Heart left ventricle (tissue), 16 donors: ENCODE measurements at regions of chr9 and their contacts with region 1.

Region 1: GRCh38 chr9:5437254-5438216 is at the start of gene PLGRKT:
- DNase-seq: peak; percentile 95 to 98 (median 97)
- ATAC-seq: peak; percentile 98 to 99 (median 99)
- H3K4me3 ChIP-seq: peak within 1 kb of the TSS; percentile 32 to 84 (median 75)
- H3K27ac ChIP-seq: peak within 1 kb of the TSS; percentile 83 to 99 (median 94)
- H3K4me1 ChIP-seq: peaks cover 0 to 24% (median 18%) of the 10 kb centered on the region in 12 donors
- H3K27me3 ChIP-seq: no peaks in the 10 kb centered on the region
- CTCF ChIP-seq: peak in 8 of 12 donors; percentile 8 to 56 (median 30)
- POLR2A ChIP-seq: peak in 1 of 2 donors; percentile 95
- total RNA-seq, gene PLGRKT: 20.8 to 37.2 (median 31.0) TPM

Region 2: DNA sequence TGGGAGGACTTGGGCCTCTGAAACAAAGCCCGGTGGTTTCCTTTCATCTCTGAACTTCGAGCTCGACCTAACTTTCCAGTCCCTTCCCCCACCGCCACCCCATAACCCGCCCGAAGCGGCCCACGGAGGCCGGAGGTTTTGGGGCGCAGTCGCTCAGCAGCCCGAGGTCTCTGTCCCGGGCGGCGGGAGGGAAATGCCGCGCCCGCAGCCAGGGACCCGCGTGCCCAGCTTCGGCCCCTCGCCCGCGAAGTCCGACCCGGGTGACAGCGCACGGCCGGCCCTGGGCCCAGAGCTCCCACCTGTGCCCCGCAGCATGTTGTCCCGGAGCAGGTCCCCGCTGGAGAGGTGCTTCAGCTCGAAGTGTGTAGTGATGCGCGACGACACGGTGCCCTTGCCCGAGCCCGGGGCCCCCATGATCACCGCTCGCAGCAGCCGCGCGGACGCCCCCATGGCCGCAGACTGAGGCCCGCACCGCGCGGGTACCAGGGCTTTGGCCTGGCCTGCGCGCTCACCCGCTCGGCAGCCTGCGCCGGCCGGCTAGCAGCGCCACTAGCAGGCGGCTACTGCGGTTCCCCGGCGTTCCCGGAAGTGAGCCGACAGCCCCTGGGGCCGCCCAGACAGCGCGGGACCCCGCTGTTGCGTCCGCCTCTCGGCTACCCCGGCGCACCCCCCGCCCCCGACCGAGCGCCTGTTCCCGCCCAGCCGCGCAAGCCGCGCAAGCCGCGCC is 696.7 kb before region 1 on chr9 and contains the start of gene AK3:
- intact Hi-C with region 1: loop called in 2 of 10 experiments (anchors 10 kb)
- DNase-seq: peak; percentile 91 to 94 (median 93)
- ATAC-seq: peak; percentile 89 to 95 (median 93)
- H3K4me3 ChIP-seq: peak within 1 kb of the TSS; percentile 54 to 98 (median 89)
- H3K27ac ChIP-seq: peak within 1 kb of the TSS; percentile 90 to 97 (median 94)
- H3K4me1 ChIP-seq: peaks cover 0 to 29% (median 15%) of the 10 kb centered on the region in 12 donors
- H3K27me3 ChIP-seq: no peaks in the 10 kb centered on the region
- CTCF ChIP-seq: peak in 10 of 12 donors; percentile 16 to 60 (median 34)
- POLR2A ChIP-seq: peak in 1 of 2 donors; percentile 87
- total RNA-seq, gene AK3: 117 to 231 (median 159) TPM

Region 3: DNA sequence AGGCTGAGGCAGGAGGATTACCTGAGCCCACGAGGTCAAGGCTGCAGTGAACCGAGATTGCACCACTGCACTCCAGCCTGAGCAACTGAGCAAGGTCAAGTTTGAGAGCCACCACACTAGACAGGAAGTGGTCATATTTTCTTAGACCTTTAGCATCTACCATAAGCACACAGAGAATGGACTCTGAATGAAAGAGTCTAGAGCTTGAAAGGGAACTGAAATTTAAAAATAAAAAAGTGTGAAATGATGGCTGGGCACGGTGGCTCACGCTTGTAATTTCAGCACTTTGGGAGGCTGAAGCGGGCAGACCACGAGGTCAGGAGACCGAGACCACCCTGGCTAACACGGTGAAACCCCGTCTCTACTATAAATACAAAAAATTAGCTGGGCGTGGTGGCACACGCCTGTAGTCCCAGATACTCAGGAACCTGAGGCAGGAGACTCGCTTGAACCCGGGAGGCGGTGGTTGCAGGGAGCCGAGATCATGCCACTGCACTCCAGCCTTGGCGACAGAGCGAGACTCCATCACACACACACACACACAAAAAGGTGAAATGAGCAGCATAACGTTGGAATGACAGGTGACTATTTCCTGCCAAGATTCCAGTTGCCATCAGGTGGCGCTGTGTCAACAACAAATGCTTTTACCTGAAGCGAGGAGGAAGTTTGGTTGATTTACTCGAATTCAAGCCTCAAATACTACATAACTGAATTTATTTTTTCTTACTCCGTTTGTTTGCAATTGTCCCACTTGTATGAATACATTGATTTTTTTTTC is 675.2 kb before region 1 on chr9:
- intact Hi-C with region 1: loop called in 3 of 10 experiments (anchors 5 to 10 kb)
- DNase-seq: peak in 4 of 5 donors; percentile 59 to 71 (median 66)
- ATAC-seq: peak; percentile 32 to 62 (median 50)
- H3K4me3 ChIP-seq: peak overlapping the region in 9 of 12 donors; percentile 7 to 39 (median 32)
- H3K27ac ChIP-seq: peak overlapping the region in 6 of 12 donors; percentile 3 to 63 (median 36)
- H3K4me1 ChIP-seq: peaks cover 0 to 45% (median 11%) of the 10 kb centered on the region in 12 donors
- H3K27me3 ChIP-seq: no peaks in the 10 kb centered on the region
- CTCF ChIP-seq: peak; percentile 61 to 91 (median 81)
- POLR2A ChIP-seq: no peak

Region 4: GRCh38 chr9:5450359-5451091 is 13.0 kb after region 1 on chr9 and contains the start of gene CD274:
- intact Hi-C with region 1: loop called in 2 of 10 experiments (anchors 1 kb)
- DNase-seq: peak; percentile 90 to 95 (median 94)
- ATAC-seq: peak; percentile 96 to 99 (median 98)
- H3K4me3 ChIP-seq: peak within 1 kb of the TSS; percentile 7 to 83 (median 66)
- H3K27ac ChIP-seq: peak within 1 kb of the TSS; percentile 6 to 97 (median 80)
- H3K4me1 ChIP-seq: peaks cover 0 to 85% (median 21%) of the 10 kb centered on the region in 12 donors
- H3K27me3 ChIP-seq: no peaks in the 10 kb centered on the region
- CTCF ChIP-seq: peak; percentile 53 to 88 (median 66)
- POLR2A ChIP-seq: no peak
- total RNA-seq, gene CD274: 11.6 to 54.4 (median 15.7) TPM

Region 5: DNA sequence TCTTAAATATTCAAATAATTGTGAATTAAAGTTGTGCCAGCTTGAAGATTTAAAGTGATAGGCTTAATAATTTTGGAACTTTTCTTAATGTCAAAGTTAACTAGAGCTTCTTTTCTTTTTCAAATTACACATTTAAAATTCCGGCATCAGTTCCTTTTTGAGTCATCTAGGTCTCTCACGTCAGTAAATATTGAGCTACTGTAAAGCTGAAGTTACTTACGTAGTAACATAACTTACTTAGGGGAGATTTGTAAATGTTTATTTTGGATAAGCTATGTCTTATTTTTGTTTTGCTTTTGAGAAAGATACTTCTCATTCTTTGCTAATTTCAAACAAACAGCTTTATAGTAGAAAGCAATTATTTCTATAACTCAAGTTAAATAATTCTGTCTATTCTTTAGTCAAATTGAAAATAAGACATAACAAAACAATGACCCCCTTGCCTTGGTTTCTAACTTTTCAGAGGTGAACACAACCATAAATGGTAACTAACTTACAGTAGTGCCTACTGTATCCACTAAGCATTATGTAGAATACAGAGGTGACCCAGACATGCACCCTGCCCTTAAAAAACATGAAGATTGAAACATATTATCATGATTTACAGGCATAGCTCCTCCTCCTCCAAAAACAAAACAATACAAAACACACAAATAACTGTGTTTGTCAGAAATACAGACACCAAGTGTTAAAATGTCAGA is 42.6 kb after region 1 on chr9:
- intact Hi-C with region 1: no loop called
- DNase-seq: no peak
- ATAC-seq: no peak
- H3K4me3 ChIP-seq: no peak overlapping the region
- H3K27ac ChIP-seq: no peak overlapping the region
- H3K4me1 ChIP-seq: peaks cover 0 to 3% (median 0%) of the 10 kb centered on the region in 12 donors
- H3K27me3 ChIP-seq: no peaks in the 10 kb centered on the region
- CTCF ChIP-seq: no peak
- POLR2A ChIP-seq: no peak

Region 6: DNA sequence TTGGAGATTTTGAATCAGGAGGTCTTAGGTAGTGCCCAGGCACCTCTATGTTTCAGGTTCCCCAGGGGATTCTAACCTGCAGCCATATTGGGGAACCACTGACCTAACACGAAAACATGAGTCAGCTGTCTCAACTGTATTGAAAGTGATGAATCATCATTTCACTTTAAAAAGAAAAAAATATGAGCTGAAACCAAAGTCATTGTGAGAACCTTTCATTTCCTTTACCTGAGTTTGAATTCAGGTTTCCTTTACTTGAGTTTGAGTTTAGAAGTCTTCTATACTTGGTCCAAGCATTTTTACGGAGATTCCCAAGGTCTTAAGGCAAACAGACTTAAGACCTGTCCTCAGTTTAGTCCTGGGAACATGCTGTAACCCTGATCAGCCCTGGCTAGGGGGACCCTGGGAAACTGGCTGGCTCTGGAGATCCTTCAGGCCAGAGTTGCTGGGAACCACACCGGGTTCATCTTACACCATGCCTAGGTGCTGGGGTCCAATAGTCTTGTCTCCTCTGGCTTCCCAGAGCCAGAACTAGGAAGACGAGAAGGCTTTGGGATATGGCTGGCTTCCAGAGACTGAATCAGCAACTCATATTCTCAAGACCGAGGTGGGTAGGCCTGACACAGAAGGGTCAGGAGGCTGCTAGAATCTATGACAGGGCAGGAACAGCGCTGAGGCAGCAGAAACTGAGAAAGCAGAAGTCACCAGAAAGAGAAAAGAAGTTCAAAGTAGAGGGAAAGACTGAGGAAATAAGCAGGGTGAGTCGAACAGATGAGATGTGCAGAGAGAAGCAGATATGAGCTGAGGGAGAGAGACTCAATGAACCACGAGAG is 56.4 kb after region 1 on chr9:
- intact Hi-C with region 1: no loop called
- DNase-seq: peak in 2 of 5 donors; percentile 38 to 50
- ATAC-seq: peak in 3 of 4 donors; percentile 64 to 78 (median 73)
- H3K4me3 ChIP-seq: no peak overlapping the region
- H3K27ac ChIP-seq: peak overlapping the region in 3 of 12 donors; percentile 32 to 91 (median 37)
- H3K4me1 ChIP-seq: peaks cover 0 to 36% (median 0%) of the 10 kb centered on the region in 12 donors
- H3K27me3 ChIP-seq: no peaks in the 10 kb centered on the region
- CTCF ChIP-seq: no peak
- POLR2A ChIP-seq: no peak